BJ (cell line): ENCODE measurements at regions of chr22 and their contacts with region 1.

Region 1: DNA sequence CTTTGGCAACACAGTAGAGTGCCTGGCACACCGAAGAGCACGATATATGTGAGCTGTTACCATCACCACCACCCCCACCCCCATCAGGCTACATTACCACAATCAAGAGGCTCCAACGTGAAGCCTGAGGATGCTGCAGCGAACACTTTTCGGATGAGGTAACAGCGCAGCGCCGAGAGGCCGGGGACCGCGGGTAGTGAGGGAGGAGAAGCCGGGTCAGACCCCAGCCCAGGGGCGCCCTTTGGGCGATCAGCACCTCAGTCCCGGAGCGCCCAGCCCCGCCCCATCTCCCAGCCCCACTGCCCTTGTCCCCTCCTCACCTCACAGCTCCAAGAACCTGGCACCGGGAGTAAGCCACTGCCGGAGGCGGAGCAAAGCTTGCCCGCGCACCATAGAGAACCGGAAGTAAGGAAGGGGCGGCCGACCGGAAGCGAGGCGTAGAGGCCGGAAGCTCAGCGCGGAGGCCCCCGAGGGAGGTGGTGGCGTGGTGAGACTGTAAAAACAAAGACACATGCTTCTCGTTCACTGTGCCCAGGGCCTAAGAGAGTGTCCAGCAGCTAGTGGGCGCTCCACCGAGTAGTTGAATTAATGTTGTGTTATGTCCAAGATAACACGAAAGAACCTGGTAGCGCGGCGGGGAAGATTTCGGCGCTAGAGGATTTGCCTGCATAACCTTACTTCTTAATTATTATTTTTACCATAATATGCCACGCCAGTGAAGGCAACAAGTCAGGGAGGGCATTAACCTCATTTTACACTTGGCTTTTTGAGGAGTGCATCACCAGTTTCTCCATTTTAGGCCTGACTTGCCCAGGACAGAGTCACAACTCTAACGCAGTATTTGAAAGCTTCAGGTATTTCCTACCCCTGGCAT is at the start of gene THOC5:
- DNase-seq: peak; percentile 80
- H3K4me3 ChIP-seq: peak within 1 kb of the TSS; percentile 90
- H3K27me3 ChIP-seq: no peaks in the 10 kb centered on the region
- CTCF ChIP-seq: peak; percentile 82
- polyA plus RNA-seq, gene THOC5: 89.1 and 119 TPM in 2 replicates

Region 2: DNA sequence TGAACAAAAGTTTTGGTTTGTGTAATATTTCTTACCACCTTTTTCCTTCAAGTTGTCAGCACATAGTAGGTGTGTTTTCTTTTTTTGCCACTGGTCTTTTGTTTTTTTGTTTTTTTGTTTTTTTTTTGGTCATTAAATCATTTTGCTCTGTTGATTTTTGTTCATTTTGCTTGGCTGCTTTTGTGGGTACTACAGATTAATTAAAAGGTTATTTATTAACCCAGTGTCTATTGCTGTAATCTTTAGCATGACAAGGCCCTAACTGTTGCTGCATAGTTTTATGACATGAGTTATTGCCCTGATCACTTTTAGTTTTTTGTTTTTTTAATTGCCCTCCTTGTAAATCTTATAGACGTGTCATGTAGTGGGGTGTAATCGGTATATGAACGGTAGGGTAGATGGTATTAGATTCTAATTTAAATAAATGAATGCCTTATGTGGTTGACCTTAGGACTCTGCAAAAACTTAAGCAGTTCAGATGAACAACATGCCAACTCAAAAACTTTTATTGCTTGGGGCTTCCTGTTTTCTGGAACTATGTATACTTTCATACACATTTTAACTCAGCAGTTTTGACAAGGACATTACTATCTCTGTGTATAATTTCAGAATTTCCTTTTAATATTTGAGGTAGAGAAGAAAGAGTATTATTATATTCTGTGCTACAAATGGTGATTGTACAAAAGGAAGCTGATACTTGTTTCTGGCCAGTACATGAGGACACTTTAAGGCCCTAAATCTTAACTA is 277.6 kb before region 1 on chr22:
- CTCF ChIA-PET with region 1: no interaction called
- POLR2A ChIA-PET with region 1: no interaction called
- DNase-seq: no peak
- H3K4me3 ChIP-seq: no peak overlapping the region
- H3K27me3 ChIP-seq: no peaks in the 10 kb centered on the region
- CTCF ChIP-seq: no peak

Region 3: GRCh38 chr22:29387921-29388758 is 165.4 kb before region 1 on chr22 and contains the start of gene AP1B1:
- CTCF ChIA-PET with region 1: no interaction called
- POLR2A ChIA-PET with region 1: no interaction called
- DNase-seq: peak; percentile 49
- H3K4me3 ChIP-seq: peak within 1 kb of the TSS; percentile 77
- H3K27me3 ChIP-seq: no peaks in the 10 kb centered on the region
- CTCF ChIP-seq: peak; percentile 11; the same call in 1 of the 2 replicates
- polyA plus RNA-seq, gene AP1B1: 40.1 and 75.0 TPM in 2 replicates

Region 4: GRCh38 chr22:29563652-29564460 is 10.3 kb after region 1 on chr22:
- CTCF ChIA-PET with region 1: interaction called, 18 read pairs
- POLR2A ChIA-PET with region 1: no interaction called
- DNase-seq: no peak
- H3K4me3 ChIP-seq: no peak overlapping the region
- H3K27me3 ChIP-seq: no peaks in the 10 kb centered on the region
- CTCF ChIP-seq: no peak

Region 5: DNA sequence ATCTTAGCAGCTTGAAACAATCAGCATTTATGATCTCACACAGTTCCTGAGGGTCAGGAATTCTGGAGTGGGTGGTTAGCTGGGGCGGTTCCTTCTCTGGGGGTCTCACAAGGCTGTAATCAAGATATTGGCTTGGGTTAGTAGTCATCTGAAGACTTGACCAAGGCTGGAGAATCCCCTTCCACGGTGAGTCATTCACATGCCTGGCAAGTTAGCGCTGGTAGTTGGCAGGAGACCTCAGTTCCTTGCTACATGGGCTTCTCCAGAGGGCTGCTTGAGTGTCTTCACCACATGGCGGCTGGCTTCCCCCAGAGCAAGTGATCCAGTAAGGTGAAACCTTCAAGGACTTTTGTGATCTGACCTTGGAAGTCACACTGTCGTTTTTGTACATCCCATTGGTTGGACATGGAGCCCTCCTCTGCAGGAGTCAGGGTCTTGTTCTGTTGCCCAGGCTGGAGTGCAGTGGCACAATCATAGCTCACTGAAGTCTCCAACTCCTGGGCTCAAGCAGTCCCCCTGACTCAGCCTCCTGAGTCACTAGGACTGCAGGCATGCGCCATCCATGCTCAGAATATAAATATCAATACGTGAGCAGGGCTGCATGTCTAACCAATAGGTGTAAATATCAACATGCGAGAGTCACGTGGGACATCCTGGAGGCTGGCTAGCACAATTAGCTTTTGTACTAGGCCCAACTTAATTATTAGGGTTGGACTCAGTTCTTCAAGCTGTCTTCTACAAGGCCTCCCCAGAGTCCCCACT is 34.5 kb after region 1 on chr22:
- CTCF ChIA-PET with region 1: no interaction called
- POLR2A ChIA-PET with region 1: no interaction called
- DNase-seq: peak; percentile 32
- H3K4me3 ChIP-seq: no peak overlapping the region
- H3K27me3 ChIP-seq: no peaks in the 10 kb centered on the region
- CTCF ChIP-seq: no peak